GM18951 (cell line): ENCODE measurements at regions of chr7 and their contacts with region 1.

Region 1: GRCh38 chr7:116588641-116589594 is 64.1 kb downstream of the CAV1 start:
- POLR2A ChIP-seq: no peak

Region 2: GRCh38 chr7:116173051-116174028 is 415.6 kb before region 1 on chr7:
- in situ Hi-C with region 1: loop called (anchors 10 kb)
- POLR2A ChIP-seq: no peak

Region 3: GRCh38 chr7:116258734-116259133 is 330.2 kb before region 1 on chr7:
- in situ Hi-C with region 1: loop called (anchors 25 kb)
- POLR2A ChIP-seq: no peak

Region 4: DNA sequence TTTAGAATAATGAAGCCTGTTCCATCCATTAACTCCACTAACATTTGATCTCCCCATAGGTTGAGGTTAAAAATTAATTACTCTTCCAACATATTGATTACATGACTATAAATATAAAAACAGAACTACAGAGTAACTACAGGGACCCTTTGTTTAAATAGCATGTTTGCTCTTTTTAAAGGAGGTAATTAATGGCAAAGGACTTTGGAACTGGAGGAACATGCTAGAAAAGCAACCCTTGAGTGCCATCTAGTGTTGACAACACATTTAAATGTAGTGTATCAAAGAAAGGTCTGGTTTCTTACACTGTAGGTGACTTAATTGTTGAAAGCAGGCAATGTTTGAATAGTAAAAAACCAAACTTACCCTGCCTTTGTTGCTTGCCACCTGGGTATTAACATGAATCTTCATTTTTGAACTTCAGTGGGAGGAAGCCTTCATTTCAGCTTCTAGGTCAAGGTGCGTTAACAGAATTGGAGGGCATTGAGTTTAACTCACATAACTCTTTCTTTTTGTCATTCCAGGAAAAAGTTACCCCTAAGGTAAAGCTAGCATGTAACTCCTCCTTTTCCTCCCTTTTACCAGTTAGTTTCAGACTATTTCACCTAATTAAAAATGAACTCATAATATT is 220.8 kb after region 1 on chr7:
- in situ Hi-C with region 1: loop called (anchors 10 kb)
- POLR2A ChIP-seq: no peak